Naive thymus-derived CD4-positive, alpha-beta T cell (primary cell): ENCODE measurements at regions of chr2 and their contacts with region 1.

Region 1: DNA sequence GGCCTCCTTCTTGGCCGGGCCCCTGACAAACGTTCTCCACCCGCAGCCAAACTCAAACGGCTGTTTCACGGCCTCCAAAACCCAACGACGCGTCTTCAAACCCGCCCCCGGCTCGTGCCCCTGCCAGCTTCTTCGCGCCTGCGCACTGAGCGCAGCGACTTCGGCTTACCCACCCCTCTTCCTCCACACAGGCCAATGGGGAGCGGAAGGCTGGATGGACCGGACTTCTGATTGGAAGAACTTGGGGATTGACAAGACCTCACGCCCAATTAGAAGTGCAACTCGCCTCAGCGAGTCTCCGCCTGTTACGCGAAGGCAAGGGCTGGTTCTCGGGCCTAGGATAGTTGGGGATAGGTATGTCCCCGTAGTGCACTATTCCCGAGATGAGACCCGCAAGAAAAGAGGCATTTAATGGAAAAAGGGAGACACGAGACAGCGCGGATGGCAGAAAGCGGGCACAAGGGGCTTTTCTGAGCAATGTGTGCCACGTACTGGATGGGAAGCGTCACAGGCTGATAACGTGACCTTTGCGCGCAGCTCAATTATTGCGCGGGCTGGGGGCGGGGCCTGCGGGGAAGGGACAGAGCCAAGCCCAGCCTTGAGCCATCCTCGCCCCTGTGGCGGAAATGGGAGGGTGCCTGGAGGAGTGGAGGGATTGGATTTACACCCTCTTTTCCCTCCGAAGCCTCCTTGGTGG is at the start of gene LAPTM4A:
- DNase-seq: peak; percentile 93 to 99 (median 98)
- ATAC-seq: peak; percentile 95
- H3K4me3 ChIP-seq: peak within 1 kb of the TSS; percentile 94
- H3K4me3 Mint-ChIP-seq: no peak within 1 kb of the TSS
- H3K27ac ChIP-seq: peak within 1 kb of the TSS; percentile 93
- H3K27ac Mint-ChIP-seq: no peak within 1 kb of the TSS
- H3K4me1 ChIP-seq: peaks cover 16 to 20% of the 10 kb centered on the region in 2 donors
- H3K4me1 Mint-ChIP-seq: peaks cover 25 to 34% (median 31%) of the 10 kb centered on the region in 7 donors
- H3K27me3 ChIP-seq: no peaks in the 10 kb centered on the region
- H3K27me3 Mint-ChIP-seq: peaks cover 14 to 19% (median 17%) of the 10 kb centered on the region in 5 donors
- total RNA-seq, gene LAPTM4A: 32.3 to 78.2 (median 48.7) TPM

Region 2: DNA sequence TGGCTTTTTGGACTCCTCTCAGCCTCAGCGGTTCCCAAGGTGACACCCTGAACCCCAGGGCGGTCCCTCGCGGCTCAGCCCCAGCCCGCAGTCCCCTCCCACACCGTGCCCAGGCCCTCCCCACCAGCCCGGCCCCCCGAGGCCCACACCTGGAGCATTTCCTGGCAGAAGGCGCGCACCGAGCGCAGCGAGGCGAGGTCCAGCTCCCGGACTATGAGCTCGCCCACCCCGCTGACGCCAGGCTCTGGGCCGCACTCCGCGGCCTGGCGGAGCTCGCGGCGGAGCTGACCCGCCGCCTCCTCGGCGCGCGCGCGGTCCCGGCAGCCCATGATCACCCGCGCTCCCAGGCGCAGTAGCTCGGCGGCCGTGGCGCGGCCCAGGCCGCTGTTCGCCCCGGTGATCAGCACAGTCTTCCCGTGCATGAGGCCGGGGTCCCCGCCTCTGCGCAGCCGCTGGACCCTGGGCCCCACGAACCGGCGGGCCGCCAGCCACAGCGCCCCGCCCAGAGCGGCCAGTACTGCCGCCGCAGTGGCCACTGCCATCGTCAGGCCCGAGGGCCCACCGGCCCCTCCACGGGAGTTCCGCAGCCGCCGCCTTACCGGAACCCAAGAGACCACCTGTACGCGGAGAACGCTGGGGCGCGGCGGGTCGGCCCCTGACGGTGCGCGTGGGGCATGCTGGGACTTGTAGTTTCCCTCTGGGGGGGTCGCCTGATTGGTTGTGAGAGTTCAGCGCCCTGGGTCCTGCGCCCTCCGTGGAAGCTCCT is 1491.5 kb before region 1 on chr2 and contains the start of gene RDH14:
- CTCF ChIA-PET with region 1: no interaction called
- POLR2A ChIA-PET with region 1: interaction called, 3 read pairs
- intact Hi-C with region 1: loop called (anchors 1 kb)
- DNase-seq: peak; percentile 83 to 93 (median 92)
- ATAC-seq: peak; percentile 94
- H3K4me3 ChIP-seq: peak within 1 kb of the TSS; percentile 71
- H3K4me3 Mint-ChIP-seq: peak within 1 kb of the TSS; percentile 86 to 96 (median 92)
- H3K27ac ChIP-seq: peak within 1 kb of the TSS; percentile 94
- H3K27ac Mint-ChIP-seq: peak within 1 kb of the TSS; percentile 92 to 98 (median 96)
- H3K4me1 ChIP-seq: peaks cover 6 to 16% of the 10 kb centered on the region in 2 donors
- H3K4me1 Mint-ChIP-seq: peaks cover 19 to 66% (median 52%) of the 10 kb centered on the region in 7 donors
- H3K27me3 ChIP-seq: no peaks in the 10 kb centered on the region
- H3K27me3 Mint-ChIP-seq: no peaks in the 10 kb centered on the region
- total RNA-seq, gene RDH14: 9.4 to 20.9 (median 14.9) TPM

Region 3: DNA sequence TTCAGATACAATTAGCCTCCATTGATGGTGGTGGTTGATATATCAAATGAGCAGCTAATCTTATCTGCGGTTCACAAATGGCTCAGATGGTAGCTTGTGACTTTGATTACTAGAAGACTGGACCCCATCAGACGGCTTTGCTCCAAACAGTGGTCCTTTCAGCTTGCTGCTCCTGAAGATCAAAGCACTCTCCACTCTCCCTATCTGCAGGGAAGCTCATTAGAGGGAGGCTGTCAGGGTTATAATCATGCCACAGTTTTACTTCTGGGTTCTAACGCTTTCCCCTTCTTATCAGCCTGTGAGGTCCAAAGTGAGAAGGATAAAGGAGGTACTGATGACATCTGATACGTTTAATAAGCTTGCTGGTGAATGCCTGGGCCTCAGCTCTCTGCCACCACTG is 1215.2 kb before region 1 on chr2:
- CTCF ChIA-PET with region 1: no interaction called
- POLR2A ChIA-PET with region 1: no interaction called
- intact Hi-C with region 1: no loop called
- DNase-seq: no peak
- ATAC-seq: no peak
- H3K4me3 ChIP-seq: no peak overlapping the region
- H3K4me3 Mint-ChIP-seq: no peak overlapping the region
- H3K27ac ChIP-seq: no peak overlapping the region
- H3K27ac Mint-ChIP-seq: peak overlapping the region in 1 of 9 donors; percentile 73
- H3K4me1 ChIP-seq: no peaks in the 10 kb centered on the region
- H3K4me1 Mint-ChIP-seq: no peaks in the 10 kb centered on the region
- H3K27me3 ChIP-seq: no peaks in the 10 kb centered on the region
- H3K27me3 Mint-ChIP-seq: no peaks in the 10 kb centered on the region

Region 4: GRCh38 chr2:19488009-19488691 is 563.5 kb before region 1 on chr2:
- CTCF ChIA-PET with region 1: no interaction called
- POLR2A ChIA-PET with region 1: no interaction called
- intact Hi-C with region 1: no loop called
- DNase-seq: no peak
- ATAC-seq: no peak
- H3K4me3 ChIP-seq: no peak overlapping the region
- H3K4me3 Mint-ChIP-seq: no peak overlapping the region
- H3K27ac ChIP-seq: no peak overlapping the region
- H3K27ac Mint-ChIP-seq: no peak overlapping the region
- H3K4me1 ChIP-seq: no peaks in the 10 kb centered on the region
- H3K4me1 Mint-ChIP-seq: no peaks in the 10 kb centered on the region
- H3K27me3 ChIP-seq: peaks cover 0 to 6% of the 10 kb centered on the region in 2 donors
- H3K27me3 Mint-ChIP-seq: peaks cover 26 to 53% (median 44%) of the 10 kb centered on the region in 5 donors

Region 5: GRCh38 chr2:19901442-19902215 is 150.1 kb before region 1 on chr2 and contains the start of gene TTC32:
- CTCF ChIA-PET with region 1: no interaction called
- POLR2A ChIA-PET with region 1: interaction called, 11 read pairs
- intact Hi-C with region 1: loop called (anchors 1 kb)
- DNase-seq: peak; percentile 90 to 98 (median 96)
- ATAC-seq: peak; percentile 91
- H3K4me3 ChIP-seq: peak within 1 kb of the TSS; percentile 95
- H3K4me3 Mint-ChIP-seq: peak within 1 kb of the TSS; percentile 84 to 99 (median 96)
- H3K27ac ChIP-seq: peak within 1 kb of the TSS; percentile 83
- H3K27ac Mint-ChIP-seq: peak within 1 kb of the TSS; percentile 93 to 100 (median 99)
- H3K4me1 ChIP-seq: peaks cover 15 to 23% of the 10 kb centered on the region in 2 donors
- H3K4me1 Mint-ChIP-seq: peaks cover 24 to 35% (median 31%) of the 10 kb centered on the region in 7 donors
- H3K27me3 ChIP-seq: no peaks in the 10 kb centered on the region
- H3K27me3 Mint-ChIP-seq: peaks cover 8 to 19% (median 13%) of the 10 kb centered on the region in 5 donors
- total RNA-seq, gene TTC32: 23.1 to 58.0 (median 44.9) TPM

Region 6: DNA sequence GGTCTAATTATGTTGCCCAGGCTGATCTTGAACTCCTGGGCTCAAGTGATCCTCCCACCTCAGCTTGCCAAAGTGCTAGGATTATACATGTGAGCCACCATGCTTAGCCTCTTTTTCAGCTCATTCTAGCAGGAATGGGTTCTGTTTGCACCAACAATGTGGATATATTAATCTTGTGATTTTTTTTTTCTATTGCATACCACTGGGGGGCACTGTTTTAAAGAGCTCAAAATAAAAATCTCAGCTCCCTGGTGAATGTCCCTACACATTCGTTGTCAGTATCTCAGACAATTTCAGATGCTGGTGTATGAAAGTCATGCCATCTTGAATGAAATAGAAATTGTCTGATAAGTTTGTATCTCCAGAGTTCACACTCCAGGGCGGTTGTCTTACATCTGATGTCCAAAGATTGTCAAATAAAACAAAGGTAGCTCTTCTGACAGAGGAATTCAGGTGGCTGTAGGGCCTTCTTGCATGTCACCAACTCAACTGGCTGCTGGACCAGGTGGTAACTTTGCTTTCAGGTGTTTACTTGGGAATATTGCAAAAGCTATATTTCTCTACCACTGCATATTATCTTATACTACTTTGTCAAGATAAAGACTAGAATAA is 36.1 kb before region 1 on chr2:
- CTCF ChIA-PET with region 1: interaction called, 3 read pairs
- POLR2A ChIA-PET with region 1: no interaction called
- intact Hi-C with region 1: loop called (anchors 1 to 2 kb)
- DNase-seq: peak in 5 of 9 donors; percentile 33 to 55 (median 43)
- ATAC-seq: peak; percentile 82
- H3K4me3 ChIP-seq: no peak overlapping the region
- H3K4me3 Mint-ChIP-seq: no peak overlapping the region
- H3K27ac ChIP-seq: no peak overlapping the region
- H3K27ac Mint-ChIP-seq: no peak overlapping the region
- H3K4me1 ChIP-seq: peaks cover 0 to 3% of the 10 kb centered on the region in 2 donors
- H3K4me1 Mint-ChIP-seq: peaks cover 5 to 16% (median 14%) of the 10 kb centered on the region in 7 donors
- H3K27me3 ChIP-seq: no peaks in the 10 kb centered on the region
- H3K27me3 Mint-ChIP-seq: peaks cover 33 to 48% (median 36%) of the 10 kb centered on the region in 5 donors

Region 7: DNA sequence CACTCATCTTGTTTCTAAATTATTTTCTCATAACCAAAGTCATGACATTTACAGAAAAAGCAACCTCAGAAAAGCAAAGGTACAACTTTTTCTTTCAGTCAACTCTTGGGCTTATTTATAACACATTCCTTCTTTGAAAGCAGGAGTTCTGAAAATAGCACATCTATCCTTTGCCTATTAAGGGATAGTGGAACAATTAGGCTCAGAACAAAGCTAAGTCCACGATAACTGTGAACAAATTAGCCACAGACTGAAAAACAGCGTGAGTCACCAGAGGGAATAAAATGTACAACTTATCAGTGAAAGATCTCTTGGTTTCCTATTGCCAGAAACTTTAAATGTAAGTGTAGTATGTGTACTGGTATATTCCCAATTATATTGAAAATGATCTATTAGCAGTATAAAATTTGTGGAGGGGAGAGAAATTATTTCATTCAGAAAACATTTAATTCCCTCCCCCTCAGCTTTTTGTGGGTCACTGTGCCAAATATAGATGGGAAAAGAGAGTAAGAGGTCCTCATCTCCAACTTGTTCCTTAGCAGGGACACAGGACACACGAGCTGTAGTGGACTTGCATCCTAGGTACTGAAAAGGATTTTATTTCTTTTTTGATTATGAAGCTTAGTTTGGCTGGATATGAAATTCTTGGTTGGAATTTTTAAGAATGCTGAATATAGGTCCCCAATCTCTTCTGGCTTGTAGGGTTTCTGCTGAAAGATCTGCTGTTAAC is 23.8 kb before region 1 on chr2:
- CTCF ChIA-PET with region 1: no interaction called
- POLR2A ChIA-PET with region 1: no interaction called
- intact Hi-C with region 1: no loop called
- DNase-seq: no peak
- ATAC-seq: no peak
- H3K4me3 ChIP-seq: no peak overlapping the region
- H3K4me3 Mint-ChIP-seq: no peak overlapping the region
- H3K27ac ChIP-seq: no peak overlapping the region
- H3K27ac Mint-ChIP-seq: no peak overlapping the region
- H3K4me1 ChIP-seq: no peaks in the 10 kb centered on the region
- H3K4me1 Mint-ChIP-seq: no peaks in the 10 kb centered on the region
- H3K27me3 ChIP-seq: no peaks in the 10 kb centered on the region
- H3K27me3 Mint-ChIP-seq: no peaks in the 10 kb centered on the region

Region 8: GRCh38 chr2:20365249-20365817 is 313.7 kb after region 1 on chr2:
- CTCF ChIA-PET with region 1: no interaction called
- POLR2A ChIA-PET with region 1: no interaction called
- intact Hi-C with region 1: loop called in 1 of 2 experiments (anchors 5 kb)
- DNase-seq: peak in 1 of 9 donors; percentile 57
- ATAC-seq: peak; percentile 27
- H3K4me3 ChIP-seq: no peak overlapping the region
- H3K4me3 Mint-ChIP-seq: peak overlapping the region in 1 of 10 donors; percentile 71
- H3K27ac ChIP-seq: no peak overlapping the region
- H3K27ac Mint-ChIP-seq: peak overlapping the region in 1 of 9 donors; percentile 79
- H3K4me1 ChIP-seq: no peaks in the 10 kb centered on the region
- H3K4me1 Mint-ChIP-seq: peaks cover 0 to 28% (median 0%) of the 10 kb centered on the region in 7 donors
- H3K27me3 ChIP-seq: no peaks in the 10 kb centered on the region
- H3K27me3 Mint-ChIP-seq: peaks cover 0 to 12% (median 7%) of the 10 kb centered on the region in 5 donors

Region 9: GRCh38 chr2:20650880-20651730 is 599.4 kb after region 1 on chr2 and contains the start of gene HS1BP3:
- CTCF ChIA-PET with region 1: no interaction called
- POLR2A ChIA-PET with region 1: no interaction called
- intact Hi-C with region 1: loop called (anchors 1 to 2 kb)
- DNase-seq: peak; percentile 87 to 99 (median 94)
- ATAC-seq: peak; percentile 97
- H3K4me3 ChIP-seq: peak within 1 kb of the TSS; percentile 80
- H3K4me3 Mint-ChIP-seq: peak within 1 kb of the TSS; percentile 86 to 95 (median 90)
- H3K27ac ChIP-seq: peak within 1 kb of the TSS; percentile 86
- H3K27ac Mint-ChIP-seq: peak within 1 kb of the TSS; percentile 90 to 99 (median 96)
- H3K4me1 ChIP-seq: peaks cover 16 to 20% of the 10 kb centered on the region in 2 donors
- H3K4me1 Mint-ChIP-seq: peaks cover 22 to 42% (median 39%) of the 10 kb centered on the region in 7 donors
- H3K27me3 ChIP-seq: no peaks in the 10 kb centered on the region
- H3K27me3 Mint-ChIP-seq: peaks cover 0 to 11% (median 0%) of the 10 kb centered on the region in 5 donors
- total RNA-seq, gene HS1BP3: 12.0 to 19.0 (median 18.3) TPM